Right ventricle myocardium superior (tissue), 1 donor: ENCODE measurements at regions of chr7 and their contacts with region 1.

Region 1: DNA sequence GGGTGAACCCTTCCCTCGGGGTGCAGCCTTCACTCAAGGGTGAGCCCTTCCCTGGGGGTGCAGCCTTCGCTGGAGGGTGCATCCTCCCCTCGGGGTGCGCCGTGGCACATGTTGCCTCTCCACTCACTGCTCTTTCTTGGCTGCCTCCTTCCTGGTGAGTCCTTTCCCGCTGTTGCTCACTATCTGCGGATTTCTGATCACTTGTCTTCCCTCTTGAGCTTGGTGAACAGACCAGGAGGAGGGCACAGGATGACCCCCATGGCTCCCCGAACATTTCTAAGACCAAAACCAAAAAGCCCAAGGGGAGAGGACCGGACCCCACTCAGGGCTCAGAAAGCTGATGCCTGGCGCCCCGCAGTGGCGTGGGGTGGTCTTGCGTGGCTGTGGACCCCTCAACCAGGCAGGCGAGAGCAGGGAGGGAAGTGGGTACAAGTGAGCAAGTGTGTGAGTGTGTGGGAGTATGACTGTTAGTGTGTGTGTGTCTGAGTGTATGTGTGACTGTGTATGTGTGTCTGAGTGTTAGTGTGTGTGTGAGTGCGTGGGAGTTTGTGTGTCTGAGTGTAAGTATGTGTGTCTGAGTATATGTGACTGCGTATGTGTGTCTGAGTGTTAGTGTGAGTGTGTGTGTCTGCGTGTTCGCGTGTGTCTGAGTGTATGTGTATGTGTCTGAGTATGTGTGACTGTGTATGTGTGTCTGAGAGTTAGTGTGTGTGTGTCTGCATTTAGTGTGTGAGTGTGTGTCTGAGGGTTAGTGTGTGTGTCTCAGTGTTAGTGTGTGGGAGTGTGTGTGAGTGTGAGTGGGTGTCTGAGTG is 34.1 kb upstream of the INSIG1 start:
- DNase-seq: no peak
- ATAC-seq: no peak

Region 2: DNA sequence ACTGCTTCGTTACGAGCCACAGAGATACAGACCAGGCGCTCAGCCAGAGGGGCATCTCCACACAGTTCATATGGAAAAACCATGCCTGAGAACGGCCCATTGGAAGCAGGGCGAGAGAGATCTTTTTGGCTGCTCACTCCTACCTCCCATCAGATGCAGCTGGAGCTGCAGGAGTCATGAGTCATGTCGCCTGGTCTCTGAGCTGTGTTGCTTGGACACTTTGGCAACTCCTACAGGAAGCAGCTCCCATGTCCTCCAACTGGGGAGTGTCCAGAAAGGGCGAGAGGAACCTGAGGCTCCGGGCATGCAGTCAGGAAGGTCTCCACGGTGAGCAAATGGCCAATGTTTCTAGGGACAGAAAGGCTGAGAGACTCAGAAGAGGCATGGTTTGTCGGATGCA is 59.0 kb after region 1 on chr7:
- intact Hi-C with region 1: loop called (anchors 10 kb)
- DNase-seq: no peak
- ATAC-seq: no peak